ENCODE measurements at regions of chr2 and their contacts with region 1.

Region 1: GRCh38 chr2:178136321-178137025 is 24.2 kb downstream of the RBM45 start:
- DNase-seq: no peak
- H3K4me3 ChIP-seq: no peak overlapping the region
- H3K27ac ChIP-seq: no peak overlapping the region
- H3K4me1 ChIP-seq: no peaks in the 10 kb centered on the region
- H3K27me3 ChIP-seq: no peaks in the 10 kb centered on the region
- CTCF ChIP-seq: no peak
- POLR2A ChIP-seq: no peak

Region 2: GRCh38 chr2:177572236-177572671 is 564.2 kb before region 1 on chr2:
- intact Hi-C with region 1: no loop called
- DNase-seq: no peak
- H3K4me3 ChIP-seq: no peak overlapping the region
- H3K27ac ChIP-seq: peak overlapping the region; percentile 43 to 48
- H3K4me1 ChIP-seq: no peaks in the 10 kb centered on the region
- H3K27me3 ChIP-seq: no peaks in the 10 kb centered on the region
- CTCF ChIP-seq: no peak
- POLR2A ChIP-seq: no peak

Region 3: GRCh38 chr2:178280244-178280852 is 143.9 kb after region 1 on chr2:
- intact Hi-C with region 1: loop called (anchors 10 kb)
- DNase-seq: peak in 1 of 2 donors; percentile 29
- H3K4me3 ChIP-seq: no peak overlapping the region
- H3K27ac ChIP-seq: no peak overlapping the region
- H3K4me1 ChIP-seq: no peaks in the 10 kb centered on the region
- H3K27me3 ChIP-seq: no peaks in the 10 kb centered on the region
- CTCF ChIP-seq: peak; percentile 53 to 63 (median 56)
- POLR2A ChIP-seq: no peak

Measured in uterus (tissue), 4 donors.